CD8-positive, alpha-beta T cell (primary cell): ENCODE measurements at regions of chr10 and their contacts with region 1.

Region 1: DNA sequence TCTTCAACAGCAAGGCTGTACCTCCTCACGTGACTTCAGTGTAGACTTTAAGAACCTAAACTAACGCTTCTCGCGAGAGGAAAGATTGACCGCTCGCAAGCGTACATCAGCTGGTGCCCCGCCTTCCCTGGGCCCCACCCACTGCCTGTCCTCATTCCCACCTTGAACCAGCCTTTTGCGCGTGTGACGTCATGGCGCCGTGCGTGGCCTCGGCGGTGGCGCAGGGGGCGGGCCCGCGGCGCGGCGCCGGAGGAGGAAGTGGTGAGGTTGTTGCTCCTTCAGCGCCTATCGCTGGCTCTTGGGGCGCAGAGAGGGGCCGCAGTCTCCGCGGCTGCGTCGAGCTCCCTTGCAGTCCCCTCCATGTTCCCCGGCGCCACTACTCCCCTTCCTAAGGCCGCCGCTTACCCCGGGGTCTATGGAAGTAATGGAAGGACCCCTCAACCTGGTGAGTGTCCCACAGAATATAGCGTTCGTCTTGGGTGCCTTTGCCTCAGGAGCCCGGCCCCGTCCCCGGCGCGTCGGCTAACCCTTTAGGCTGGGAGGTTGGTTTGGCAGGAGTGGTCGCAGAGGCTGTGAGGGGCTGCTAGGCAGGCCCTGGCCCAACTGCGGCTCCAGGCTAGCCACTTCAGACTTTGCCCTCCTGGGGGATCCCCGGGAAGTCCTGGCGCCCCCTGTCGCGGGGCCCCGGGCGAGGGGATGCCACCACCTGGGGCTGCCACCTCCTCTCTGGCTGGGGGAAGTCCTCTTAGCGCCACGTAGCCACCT is at the start of gene NRBF2:
- DNase-seq: peak; percentile 94 to 99 (median 97)
- ATAC-seq: peak; percentile 91
- H3K4me3 ChIP-seq: peak within 1 kb of the TSS; percentile 96 to 97
- H3K4me3 Mint-ChIP-seq: peak within 1 kb of the TSS; percentile 91
- H3K27ac ChIP-seq: peak within 1 kb of the TSS; percentile 96 to 98
- H3K27ac Mint-ChIP-seq: peak within 1 kb of the TSS; percentile 97
- H3K4me1 ChIP-seq: peaks cover 41% of the 10 kb centered on the region
- H3K4me1 Mint-ChIP-seq: peaks cover 37% of the 10 kb centered on the region
- H3K27me3 ChIP-seq: no peaks in the 10 kb centered on the region
- H3K27me3 Mint-ChIP-seq: peaks cover 5% of the 10 kb centered on the region
- CTCF ChIP-seq: peak; percentile 22
- total RNA-seq, gene NRBF2: 26.6 to 29.1 TPM

Region 2: GRCh38 chr10:62528441-62528840 is 604.8 kb before region 1 on chr10:
- CTCF ChIA-PET with region 1: no interaction called
- POLR2A ChIA-PET with region 1: no interaction called
- intact Hi-C with region 1: loop called in 1 of 2 experiments (anchors 5 kb)
- DNase-seq: peak in 2 of 9 experiments; percentile 57 to 75
- ATAC-seq: peak; percentile 88
- H3K4me3 ChIP-seq: peak overlapping the region in 1 of 2 experiments; percentile 14
- H3K4me3 Mint-ChIP-seq: peak overlapping the region; percentile 40
- H3K27ac ChIP-seq: no peak overlapping the region
- H3K27ac Mint-ChIP-seq: peak overlapping the region; percentile 70
- H3K4me1 ChIP-seq: peaks cover 43% of the 10 kb centered on the region
- H3K4me1 Mint-ChIP-seq: peaks cover 44% of the 10 kb centered on the region
- H3K27me3 ChIP-seq: no peaks in the 10 kb centered on the region
- H3K27me3 Mint-ChIP-seq: no peaks in the 10 kb centered on the region
- CTCF ChIP-seq: no peak

Region 3: GRCh38 chr10:62804356-62805230 is 328.6 kb before region 1 on chr10 and contains the start of gene ADO:
- CTCF ChIA-PET with region 1: interaction called, 4 read pairs
- POLR2A ChIA-PET with region 1: no interaction called
- intact Hi-C with region 1: loop called (anchors 1 to 5 kb)
- DNase-seq: peak; percentile 52 to 90 (median 78)
- ATAC-seq: peak; percentile 88
- H3K4me3 ChIP-seq: peak within 1 kb of the TSS; percentile 88 to 89
- H3K4me3 Mint-ChIP-seq: peak within 1 kb of the TSS; percentile 97
- H3K27ac ChIP-seq: peak within 1 kb of the TSS; percentile 76 to 98
- H3K27ac Mint-ChIP-seq: peak within 1 kb of the TSS; percentile 99
- H3K4me1 ChIP-seq: peaks cover 29% of the 10 kb centered on the region
- H3K4me1 Mint-ChIP-seq: peaks cover 40% of the 10 kb centered on the region
- H3K27me3 ChIP-seq: no peaks in the 10 kb centered on the region
- H3K27me3 Mint-ChIP-seq: no peaks in the 10 kb centered on the region
- CTCF ChIP-seq: no peak
- total RNA-seq, gene ADO: 12.7 to 13.1 TPM

Region 4: DNA sequence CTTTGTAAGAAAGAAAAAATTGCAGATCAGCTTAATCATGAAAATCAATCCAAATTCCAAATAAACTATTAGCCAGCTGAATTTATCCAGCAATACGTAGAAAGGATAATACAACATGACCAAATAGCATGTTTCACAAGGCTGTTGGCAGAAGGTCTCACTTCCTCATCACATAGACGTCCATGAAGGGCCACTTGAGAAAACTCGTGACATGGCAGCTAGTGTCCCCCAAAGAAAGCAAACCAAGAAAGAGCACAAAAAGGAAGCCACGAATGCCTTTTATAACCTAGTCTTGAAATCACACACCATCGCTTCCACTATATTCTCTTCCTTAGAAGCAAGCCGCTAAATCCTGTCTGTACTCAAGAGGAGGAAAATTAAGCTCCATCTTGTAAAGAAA is 105.7 kb before region 1 on chr10:
- CTCF ChIA-PET with region 1: no interaction called
- POLR2A ChIA-PET with region 1: no interaction called
- intact Hi-C with region 1: no loop called
- DNase-seq: no peak
- ATAC-seq: no peak
- H3K4me3 ChIP-seq: no peak overlapping the region
- H3K4me3 Mint-ChIP-seq: no peak overlapping the region
- H3K27ac ChIP-seq: no peak overlapping the region
- H3K27ac Mint-ChIP-seq: no peak overlapping the region
- H3K4me1 ChIP-seq: no peaks in the 10 kb centered on the region
- H3K4me1 Mint-ChIP-seq: no peaks in the 10 kb centered on the region
- H3K27me3 ChIP-seq: no peaks in the 10 kb centered on the region
- H3K27me3 Mint-ChIP-seq: peaks cover 4% of the 10 kb centered on the region
- CTCF ChIP-seq: no peak

Region 5: DNA sequence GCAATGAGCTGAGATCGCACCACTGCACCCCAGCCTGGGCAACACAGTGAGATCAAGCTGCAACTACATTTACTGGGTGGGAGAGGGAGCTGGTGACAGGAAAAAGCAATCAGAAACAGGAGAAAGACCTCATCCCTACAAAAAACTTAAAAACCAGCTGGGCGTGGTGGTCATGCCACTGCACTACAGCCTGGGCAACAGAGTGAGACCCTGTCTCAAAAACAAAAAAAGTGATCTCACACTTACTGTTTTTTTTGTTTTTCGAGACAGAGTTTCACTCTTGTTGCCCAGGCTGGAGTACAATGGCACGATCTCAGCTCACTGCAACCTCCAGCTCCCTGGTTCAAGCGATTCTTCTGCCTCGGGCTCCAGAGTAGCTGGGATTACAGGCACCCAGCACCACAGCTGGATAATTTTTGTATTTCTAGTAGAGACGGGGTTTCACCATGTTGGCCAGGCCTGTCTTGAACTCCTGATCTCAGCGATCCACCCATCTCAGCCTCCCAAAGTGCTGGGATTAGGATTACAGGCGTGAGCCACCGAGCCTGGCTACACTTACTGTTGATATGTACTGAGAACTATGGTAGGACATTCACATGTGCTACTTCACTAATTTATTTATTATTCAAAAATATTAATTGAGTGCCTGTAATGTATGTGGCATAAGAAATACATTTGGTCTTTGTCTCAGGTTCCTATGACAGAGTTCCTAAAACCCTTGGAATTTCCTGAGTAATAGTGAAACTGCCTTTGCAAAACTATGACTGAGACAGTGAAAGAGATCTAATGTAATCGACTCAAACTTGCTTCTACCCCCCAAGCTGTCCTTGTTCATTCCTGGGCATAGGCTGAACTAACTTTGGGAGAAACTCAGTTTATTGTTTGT is 27.8 kb before region 1 on chr10:
- CTCF ChIA-PET with region 1: no interaction called
- POLR2A ChIA-PET with region 1: no interaction called
- intact Hi-C with region 1: no loop called
- DNase-seq: no peak
- ATAC-seq: no peak
- H3K4me3 ChIP-seq: no peak overlapping the region
- H3K4me3 Mint-ChIP-seq: no peak overlapping the region
- H3K27ac ChIP-seq: no peak overlapping the region
- H3K27ac Mint-ChIP-seq: no peak overlapping the region
- H3K4me1 ChIP-seq: no peaks in the 10 kb centered on the region
- H3K4me1 Mint-ChIP-seq: no peaks in the 10 kb centered on the region
- H3K27me3 ChIP-seq: peaks cover 0 to 5% of the 10 kb centered on the region in 2 experiments
- H3K27me3 Mint-ChIP-seq: peaks cover 38% of the 10 kb centered on the region
- CTCF ChIP-seq: no peak

Region 6: DNA sequence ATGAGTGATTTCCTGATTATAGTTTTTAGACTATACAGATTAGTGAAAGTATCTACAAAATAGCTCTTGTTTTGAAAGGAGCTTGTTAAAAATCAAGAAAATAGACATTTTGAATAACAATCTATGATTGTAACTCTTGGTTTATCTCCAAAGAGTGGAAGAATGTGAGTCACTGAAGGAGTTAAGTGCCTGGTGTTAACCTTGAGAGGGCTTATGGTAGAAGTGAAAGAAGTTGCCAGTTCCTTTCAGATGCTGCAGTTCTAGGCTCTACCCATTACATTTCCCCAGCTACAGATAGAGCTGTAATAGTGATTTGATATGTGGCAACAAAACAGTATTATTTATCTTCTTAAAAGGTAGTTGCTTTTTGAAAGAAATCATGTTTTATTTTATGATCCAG is 12.5 kb after region 1 on chr10:
- CTCF ChIA-PET with region 1: interaction called, 5 read pairs
- POLR2A ChIA-PET with region 1: interaction called, 9 read pairs
- intact Hi-C with region 1: loop called in 1 of 2 experiments (anchors 2 kb)
- DNase-seq: no peak
- ATAC-seq: no peak
- H3K4me3 ChIP-seq: no peak overlapping the region
- H3K4me3 Mint-ChIP-seq: no peak overlapping the region
- H3K27ac ChIP-seq: no peak overlapping the region
- H3K27ac Mint-ChIP-seq: no peak overlapping the region
- H3K4me1 ChIP-seq: peaks cover 16% of the 10 kb centered on the region
- H3K4me1 Mint-ChIP-seq: peaks cover 52% of the 10 kb centered on the region
- H3K27me3 ChIP-seq: no peaks in the 10 kb centered on the region
- H3K27me3 Mint-ChIP-seq: no peaks in the 10 kb centered on the region
- CTCF ChIP-seq: no peak